ENCODE measurements at regions of chr13 and their contacts with region 1.

Region 1: GRCh38 chr13:97212601-97213040 is 9.5 kb upstream of the MBNL2 start:
- DNase-seq: no peak
- ATAC-seq: no peak
- H3K4me3 ChIP-seq: no peak overlapping the region
- H3K27ac ChIP-seq: no peak overlapping the region
- H3K4me1 ChIP-seq: no peaks in the 10 kb centered on the region
- H3K27me3 ChIP-seq: no peaks in the 10 kb centered on the region

Region 2: DNA sequence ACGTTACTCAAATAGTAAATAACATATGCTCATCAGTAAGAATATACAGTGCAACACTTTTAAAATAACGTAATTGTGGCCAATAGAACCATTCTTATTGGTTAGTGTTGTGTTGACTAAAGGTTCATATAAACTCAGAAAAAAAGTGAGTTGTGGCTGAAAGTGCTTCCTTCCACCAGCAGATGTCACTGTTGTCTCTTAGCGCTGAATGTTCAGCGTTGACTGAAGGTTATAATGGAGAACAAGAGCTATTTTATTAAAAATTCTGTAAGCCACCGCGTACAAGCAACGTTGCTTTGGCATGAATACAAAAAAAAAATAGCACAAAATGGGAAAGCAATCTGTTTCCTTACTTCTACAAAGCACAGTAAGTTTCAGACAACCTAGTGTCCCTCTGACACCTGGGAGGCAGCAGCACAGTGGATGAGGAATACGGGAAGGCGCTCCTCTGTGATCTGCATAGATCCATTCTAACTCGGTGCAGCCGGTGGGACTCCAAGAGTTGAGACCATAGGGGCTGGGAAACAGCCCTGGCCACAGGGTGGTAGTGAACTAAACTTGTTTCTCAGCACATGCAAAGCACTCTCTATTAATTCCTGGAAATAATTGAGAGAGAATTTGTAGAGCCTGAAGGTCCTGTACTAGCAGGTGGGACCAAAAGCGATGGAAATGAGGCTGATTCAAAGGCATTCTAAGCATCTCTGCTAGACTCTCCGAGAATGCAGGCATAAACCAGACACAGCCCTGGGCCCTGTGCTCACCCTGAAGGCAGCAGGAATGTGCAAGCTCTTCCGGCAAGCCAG is 194.4 kb before region 1 on chr13:
- intact Hi-C with region 1: loop called in 1 of 2 experiments (anchors 5 kb)
- DNase-seq: no peak
- ATAC-seq: peak; percentile 73
- H3K4me3 ChIP-seq: peak overlapping the region in 1 of 2 donors; percentile 11
- H3K27ac ChIP-seq: no peak overlapping the region
- H3K4me1 ChIP-seq: no peaks in the 10 kb centered on the region
- H3K27me3 ChIP-seq: no peaks in the 10 kb centered on the region

Region 3: DNA sequence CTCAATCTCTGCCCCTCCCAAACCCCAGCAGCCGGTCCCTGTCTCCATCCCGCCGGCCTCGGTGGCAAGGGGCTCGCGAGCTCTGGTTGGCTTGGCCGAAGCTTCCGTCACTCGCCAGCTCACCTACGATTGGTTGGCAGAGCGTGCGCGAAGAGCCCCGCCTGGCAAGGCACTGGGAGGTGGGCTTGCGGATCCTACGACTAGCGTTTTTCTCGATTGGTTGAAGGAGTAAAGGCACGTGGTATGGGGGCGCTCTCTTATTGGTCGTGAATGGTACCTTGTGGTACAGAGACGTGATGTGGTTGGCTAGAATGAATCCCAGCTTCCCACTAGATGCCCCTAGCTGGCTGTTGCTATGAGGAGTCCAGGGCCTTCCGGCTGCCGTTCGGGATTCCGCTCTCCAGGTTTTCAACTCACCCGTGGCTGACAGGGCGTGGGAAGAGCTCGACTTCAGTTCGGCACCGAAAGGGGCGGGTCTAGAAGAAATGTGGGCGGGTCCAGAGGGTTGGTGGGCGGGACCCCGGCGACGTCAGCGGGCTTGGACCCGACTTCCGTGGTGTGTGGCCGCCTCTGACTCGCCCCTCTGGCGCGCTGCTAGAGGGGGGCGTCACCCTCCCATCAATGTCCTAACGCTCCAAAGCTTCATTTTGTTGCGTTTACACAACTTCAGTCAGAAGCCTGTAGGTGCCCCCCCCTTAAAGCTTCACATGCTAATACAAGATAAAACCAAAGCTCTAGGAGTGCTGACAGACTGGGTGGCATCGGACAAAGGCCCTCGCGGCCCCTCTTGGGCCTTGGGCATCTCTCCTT is 220.5 kb after region 1 on chr13:
- intact Hi-C with region 1: loop called in 1 of 2 experiments (anchors 10 kb)
- DNase-seq: peak; percentile 99
- ATAC-seq: peak; percentile 97
- H3K4me3 ChIP-seq: peak overlapping the region; percentile 82 to 91
- H3K27ac ChIP-seq: peak overlapping the region; percentile 96 to 100
- H3K4me1 ChIP-seq: peaks cover 0 to 1% of the 10 kb centered on the region in 2 donors
- H3K27me3 ChIP-seq: no peaks in the 10 kb centered on the region